Activated CD8-positive, alpha-beta T cell treated with anti-CD3 and anti-CD28 coated beads, Interleukin-2, amount 10 ng/mL, durations not matched to agents 7 days and 5 days (primary cell): ENCODE measurements at regions of chr17 and their contacts with region 1.

Region 1: DNA sequence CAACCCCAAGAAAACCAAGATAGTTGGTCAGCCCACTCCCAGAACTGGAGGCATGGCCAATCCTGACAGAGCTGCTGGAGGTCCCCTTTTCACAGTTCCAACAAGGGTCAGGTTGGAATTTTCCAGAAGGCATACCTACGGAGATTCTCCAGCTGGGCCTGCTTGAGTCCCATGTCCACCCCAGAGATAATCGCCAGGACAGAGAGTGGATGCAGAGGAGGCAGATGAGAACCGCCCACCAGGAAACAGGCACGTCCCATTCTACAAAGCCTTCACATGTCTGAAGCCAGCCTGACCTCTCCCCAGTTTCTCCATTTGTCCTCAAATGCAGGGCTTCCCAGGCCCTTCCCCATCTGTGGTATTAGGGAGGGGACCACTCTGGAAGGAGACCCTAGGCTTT is 47.4 kb upstream of the SMURF2 start:
- DNase-seq: no peak
- ATAC-seq: no peak
- H3K4me3 Mint-ChIP-seq: peak overlapping the region; percentile 42
- H3K27ac Mint-ChIP-seq: peak overlapping the region; percentile 78
- H3K4me1 Mint-ChIP-seq: peaks cover 80% of the 10 kb centered on the region
- H3K27me3 Mint-ChIP-seq: no peaks in the 10 kb centered on the region

Region 2: GRCh38 chr17:64625541-64625940 is 83.9 kb before region 1 on chr17:
- CTCF ChIA-PET with region 1: no interaction called
- POLR2A ChIA-PET with region 1: no interaction called
- DNase-seq: no peak
- ATAC-seq: no peak
- H3K4me3 Mint-ChIP-seq: no peak overlapping the region
- H3K27ac Mint-ChIP-seq: no peak overlapping the region
- H3K4me1 Mint-ChIP-seq: peaks cover 21% of the 10 kb centered on the region
- H3K27me3 Mint-ChIP-seq: no peaks in the 10 kb centered on the region

Region 3: GRCh38 chr17:64661976-64662773 is 47.3 kb before region 1 on chr17 and contains the start of gene SMURF2:
- CTCF ChIA-PET with region 1: no interaction called
- POLR2A ChIA-PET with region 1: interaction called, 12 read pairs
- DNase-seq: peak; percentile 84
- ATAC-seq: peak; percentile 88
- H3K4me3 Mint-ChIP-seq: peak within 1 kb of the TSS; percentile 98
- H3K27ac Mint-ChIP-seq: peak within 1 kb of the TSS; percentile 94
- H3K4me1 Mint-ChIP-seq: peaks cover 36% of the 10 kb centered on the region
- H3K27me3 Mint-ChIP-seq: no peaks in the 10 kb centered on the region
- total RNA-seq, gene SMURF2: 16.1 to 16.4 TPM

Region 4: DNA sequence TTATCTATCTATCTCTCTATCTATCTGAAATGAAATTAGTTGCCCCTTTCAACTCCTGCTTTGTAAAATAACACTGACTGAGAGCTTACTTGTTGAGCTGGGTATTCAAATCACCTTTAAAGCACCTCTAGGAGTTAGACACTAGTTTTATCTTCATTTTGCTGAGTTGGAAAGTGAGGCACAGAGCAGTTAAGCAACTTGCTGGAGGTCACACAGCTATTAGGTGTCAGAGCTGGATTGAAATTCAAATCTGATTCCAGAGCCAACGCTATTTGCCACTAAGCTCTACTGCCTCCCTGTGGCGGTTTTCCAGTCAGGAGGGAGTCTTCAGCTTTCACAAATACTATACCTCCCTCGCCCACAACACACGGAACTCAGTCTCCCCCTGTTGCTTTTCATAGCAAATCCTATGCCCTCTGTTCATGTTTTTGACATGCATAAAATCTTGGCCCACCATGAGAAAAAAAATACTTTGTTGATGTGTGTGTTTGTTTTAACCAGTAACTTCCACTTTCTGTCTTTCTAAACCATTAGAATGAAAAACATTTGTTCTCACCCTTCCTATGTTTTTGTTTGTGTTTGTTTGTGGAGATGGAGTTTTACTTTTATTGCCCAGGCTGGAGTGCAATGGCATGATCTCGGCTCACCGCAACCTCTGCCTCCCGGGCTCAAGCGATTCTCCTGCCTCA is 27.5 kb after region 1 on chr17:
- CTCF ChIA-PET with region 1: interaction called, 16 read pairs
- POLR2A ChIA-PET with region 1: no interaction called
- DNase-seq: peak; percentile 77
- ATAC-seq: peak; percentile 84
- H3K4me3 Mint-ChIP-seq: no peak overlapping the region
- H3K27ac Mint-ChIP-seq: no peak overlapping the region
- H3K4me1 Mint-ChIP-seq: peaks cover 32% of the 10 kb centered on the region
- H3K27me3 Mint-ChIP-seq: no peaks in the 10 kb centered on the region

Region 5: DNA sequence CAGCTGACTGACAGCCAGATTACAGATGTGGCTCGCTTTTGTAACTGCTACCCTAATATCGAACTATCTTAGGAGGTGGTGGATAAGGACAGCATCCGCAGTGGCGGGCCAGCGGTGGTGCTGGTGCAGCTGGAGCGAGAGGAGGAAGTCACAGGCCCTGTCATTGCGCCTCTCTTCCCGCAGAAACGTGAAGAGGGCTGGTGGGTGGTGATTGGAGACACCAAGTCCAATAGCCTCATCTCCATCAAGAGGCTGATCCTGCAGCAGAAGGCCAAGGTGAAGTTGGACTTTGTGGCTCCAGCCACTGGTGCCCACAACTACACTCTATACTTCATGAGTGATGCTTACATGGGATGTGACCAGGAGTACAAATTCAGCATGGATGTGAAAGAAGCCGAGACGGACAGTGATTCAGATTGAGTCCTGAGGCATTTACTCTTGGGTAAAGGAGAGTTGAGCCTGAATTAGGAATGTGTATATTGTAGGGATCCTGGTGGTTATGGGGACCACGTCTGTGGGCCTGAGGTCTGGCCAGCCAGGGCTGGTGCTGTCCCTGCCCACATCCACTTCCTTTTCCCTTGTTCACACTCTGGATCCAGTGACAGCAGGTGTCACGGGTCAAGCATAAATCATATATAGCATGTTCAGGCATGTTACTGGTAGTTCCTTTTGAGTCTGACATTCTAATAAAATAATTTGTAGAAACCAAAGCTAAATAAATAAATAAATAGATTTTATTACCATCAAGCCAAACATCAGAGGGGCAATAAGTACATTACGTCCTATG is 41.6 kb after region 1 on chr17:
- CTCF ChIA-PET with region 1: no interaction called
- POLR2A ChIA-PET with region 1: no interaction called
- DNase-seq: no peak
- ATAC-seq: no peak
- H3K4me3 Mint-ChIP-seq: no peak overlapping the region
- H3K27ac Mint-ChIP-seq: no peak overlapping the region
- H3K4me1 Mint-ChIP-seq: peaks cover 10% of the 10 kb centered on the region
- H3K27me3 Mint-ChIP-seq: no peaks in the 10 kb centered on the region